MCF 10A (cell line): ENCODE measurements at regions of chr10 and their contacts with region 1.

Region 1: GRCh38 chr10:80855348-80855971 is 317.8 kb downstream of the SH2D4B start:
- DNase-seq: peak; percentile 22
- H3K4me3 Mint-ChIP-seq: no peak overlapping the region
- H3K27ac Mint-ChIP-seq: no peak overlapping the region
- H3K4me1 Mint-ChIP-seq: no peaks in the 10 kb centered on the region
- H3K27me3 Mint-ChIP-seq: peaks cover 49% of the 10 kb centered on the region
- CTCF ChIP-seq: peak; percentile 46

Region 2: GRCh38 chr10:80429521-80429966 is 425.9 kb before region 1 on chr10:
- CTCF ChIA-PET with region 1: no interaction called
- POLR2A ChIA-PET with region 1: no interaction called
- intact Hi-C with region 1: no loop called
- DNase-seq: peak; percentile 95
- H3K4me3 Mint-ChIP-seq: peak overlapping the region; percentile 12
- H3K27ac Mint-ChIP-seq: peak overlapping the region; percentile 94
- H3K4me1 Mint-ChIP-seq: peaks cover 12% of the 10 kb centered on the region
- H3K27me3 Mint-ChIP-seq: no peaks in the 10 kb centered on the region
- CTCF ChIP-seq: no peak

Region 3: GRCh38 chr10:80460399-80461207 is 394.9 kb before region 1 on chr10:
- CTCF ChIA-PET with region 1: no interaction called
- POLR2A ChIA-PET with region 1: no interaction called
- intact Hi-C with region 1: no loop called
- DNase-seq: peak; percentile 60
- H3K4me3 Mint-ChIP-seq: peak overlapping the region; percentile 58
- H3K27ac Mint-ChIP-seq: peak overlapping the region; percentile 89
- H3K4me1 Mint-ChIP-seq: peaks cover 75% of the 10 kb centered on the region
- H3K27me3 Mint-ChIP-seq: no peaks in the 10 kb centered on the region
- CTCF ChIP-seq: no peak

Region 4: GRCh38 chr10:80952436-80952835 is 97.0 kb after region 1 on chr10:
- CTCF ChIA-PET with region 1: no interaction called
- POLR2A ChIA-PET with region 1: no interaction called
- intact Hi-C with region 1: no loop called
- DNase-seq: no peak
- H3K4me3 Mint-ChIP-seq: no peak overlapping the region
- H3K27ac Mint-ChIP-seq: no peak overlapping the region
- H3K4me1 Mint-ChIP-seq: no peaks in the 10 kb centered on the region
- H3K27me3 Mint-ChIP-seq: peaks cover 13% of the 10 kb centered on the region
- CTCF ChIP-seq: no peak

Region 5: DNA sequence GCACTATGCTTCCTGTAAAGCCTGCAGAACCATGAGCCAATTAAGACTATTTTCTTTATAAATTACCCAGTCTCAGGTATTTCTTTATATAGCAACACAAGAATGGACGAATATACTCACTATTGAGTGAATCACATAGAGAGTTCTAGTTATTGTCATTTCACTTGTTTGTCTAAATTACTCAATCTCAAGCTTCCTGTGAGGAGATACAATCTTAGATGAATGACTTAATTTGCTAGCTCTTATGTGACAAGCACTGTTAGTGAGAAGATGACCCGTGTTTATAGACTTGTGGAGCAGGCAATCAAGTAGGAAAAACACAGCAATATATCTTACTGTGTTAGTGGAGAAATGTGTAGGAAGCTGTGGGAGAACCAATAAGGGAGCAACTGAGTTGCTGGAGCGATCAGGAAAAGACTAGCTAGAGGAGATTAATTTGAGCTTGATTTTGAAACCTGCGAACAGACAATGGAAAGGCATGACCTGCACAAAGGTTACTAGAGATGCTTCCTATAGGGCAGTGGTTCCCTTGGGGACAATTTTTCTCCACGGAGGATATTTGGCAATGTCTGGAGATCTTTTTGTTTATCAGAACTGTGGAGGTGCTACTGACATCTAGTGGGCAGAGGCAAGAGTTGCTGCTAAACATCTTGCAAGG is 163.4 kb after region 1 on chr10:
- CTCF ChIA-PET with region 1: interaction called, 4 read pairs
- POLR2A ChIA-PET with region 1: no interaction called
- intact Hi-C with region 1: loop called (anchors 1 kb)
- DNase-seq: peak; percentile 64
- H3K4me3 Mint-ChIP-seq: no peak overlapping the region
- H3K27ac Mint-ChIP-seq: no peak overlapping the region
- H3K4me1 Mint-ChIP-seq: peaks cover 7% of the 10 kb centered on the region
- H3K27me3 Mint-ChIP-seq: peaks cover 29% of the 10 kb centered on the region
- CTCF ChIP-seq: peak; percentile 77

Region 6: GRCh38 chr10:81848514-81848913 is 993.1 kb after region 1 on chr10:
- CTCF ChIA-PET with region 1: no interaction called
- POLR2A ChIA-PET with region 1: no interaction called
- intact Hi-C with region 1: no loop called
- DNase-seq: no peak
- H3K4me3 Mint-ChIP-seq: no peak overlapping the region
- H3K27ac Mint-ChIP-seq: no peak overlapping the region
- H3K4me1 Mint-ChIP-seq: no peaks in the 10 kb centered on the region
- H3K27me3 Mint-ChIP-seq: no peaks in the 10 kb centered on the region
- CTCF ChIP-seq: no peak